Right ventricle myocardium superior (tissue), 1 donor: ENCODE measurements at regions of chr3 and their contacts with region 1.

Region 1: DNA sequence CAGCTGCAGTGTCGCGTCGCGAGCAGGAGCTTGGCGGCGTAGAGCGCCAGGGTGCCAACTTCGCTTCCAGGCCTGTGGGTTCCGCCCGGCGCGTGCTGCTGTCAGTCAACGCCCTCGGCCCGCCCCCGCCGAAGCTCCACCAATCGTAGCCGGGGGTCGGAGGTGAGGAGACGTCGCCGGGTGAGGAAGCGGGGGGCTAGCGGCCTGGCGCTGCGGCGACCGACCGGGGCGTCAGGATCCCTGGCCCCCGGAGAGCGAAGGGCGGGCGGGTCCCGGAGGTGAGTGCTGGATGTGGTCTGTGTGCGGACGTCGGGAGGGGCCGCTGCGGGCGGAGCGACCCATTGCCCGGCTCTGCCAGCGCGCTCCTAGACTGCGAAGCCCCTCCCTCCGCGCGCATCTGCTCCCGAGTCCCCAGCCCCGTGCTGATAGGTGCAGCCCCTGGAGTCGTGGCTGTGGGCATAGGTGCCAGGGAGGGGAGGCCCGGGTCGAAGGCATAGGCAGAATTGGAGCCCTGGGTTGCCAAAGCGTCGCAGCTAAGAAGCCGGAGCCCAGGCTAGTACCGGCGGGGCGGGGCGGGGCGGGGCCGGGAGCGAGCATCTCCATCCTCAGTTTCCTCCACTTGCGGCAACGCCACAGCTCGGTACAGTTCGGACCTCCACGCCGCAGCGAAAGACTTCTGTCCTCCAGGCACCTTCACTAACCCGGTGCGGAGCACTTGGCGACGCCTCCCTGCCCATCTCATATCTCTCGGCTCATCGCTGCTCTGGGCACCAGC is at the start of gene NXPE3:
- DNase-seq: peak; percentile 97
- ATAC-seq: peak; percentile 98
- total RNA-seq, gene NXPE3: 45.5 TPM

Region 2: DNA sequence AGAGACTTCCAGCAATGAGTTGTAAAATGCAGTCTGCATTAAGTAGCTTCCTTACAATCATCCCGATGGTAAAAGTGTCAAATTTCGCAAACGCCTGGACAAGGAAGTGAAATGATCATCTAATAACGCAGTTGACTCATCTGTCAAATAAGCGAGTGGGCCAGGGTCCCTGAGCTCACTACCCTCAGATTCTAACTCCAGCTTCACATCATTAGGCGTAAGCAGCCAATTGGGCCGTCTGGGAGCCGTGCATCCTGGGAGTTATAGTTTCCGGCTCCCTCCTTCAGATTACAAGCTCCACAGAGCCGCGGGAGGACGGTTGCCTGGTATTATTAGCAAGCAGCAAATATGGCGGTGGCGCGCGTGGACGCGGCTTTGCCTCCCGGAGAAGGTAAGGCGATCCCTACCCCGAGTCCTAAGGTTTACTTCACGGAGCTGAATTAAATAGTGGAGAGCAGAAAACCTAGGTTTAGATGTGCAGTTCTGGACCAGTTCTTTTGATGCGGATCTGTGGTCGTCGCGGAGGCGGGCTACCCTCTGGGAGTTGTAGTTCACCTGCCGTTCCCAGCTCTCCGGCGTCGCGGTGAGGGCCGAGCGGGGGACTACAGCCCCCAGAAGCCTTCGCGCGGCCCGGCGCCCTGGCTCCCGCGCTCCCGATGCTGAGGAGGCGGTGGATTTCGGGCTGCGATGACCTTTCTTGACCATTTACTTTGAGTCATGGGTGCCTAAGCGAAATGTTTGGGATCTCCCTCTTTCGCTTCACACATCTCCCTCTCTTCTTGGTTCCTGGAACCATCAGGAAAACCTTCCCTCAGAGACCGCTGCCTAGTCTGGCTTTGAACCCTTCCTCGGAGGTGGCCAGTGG is 54.7 kb before region 1 on chr3 and contains the start of gene CEP97:
- intact Hi-C with region 1: loop called (anchors 5 kb)
- DNase-seq: peak; percentile 94
- ATAC-seq: peak; percentile 100
- total RNA-seq, gene CEP97: 6.2 TPM